OCI-LY7 (cell line): ENCODE measurements at regions of chr7 and their contacts with region 1.

Region 1: GRCh38 chr7:39971924-39972323 is 21.9 kb downstream of the CDK13 start:
- DNase-seq: peak; percentile 79
- H3K4me3 ChIP-seq: peak overlapping the region; percentile 42
- H3K27ac ChIP-seq: peak overlapping the region; percentile 81
- H3K4me1 ChIP-seq: peaks cover 96% of the 10 kb centered on the region
- CTCF ChIP-seq: no peak

Region 2: DNA sequence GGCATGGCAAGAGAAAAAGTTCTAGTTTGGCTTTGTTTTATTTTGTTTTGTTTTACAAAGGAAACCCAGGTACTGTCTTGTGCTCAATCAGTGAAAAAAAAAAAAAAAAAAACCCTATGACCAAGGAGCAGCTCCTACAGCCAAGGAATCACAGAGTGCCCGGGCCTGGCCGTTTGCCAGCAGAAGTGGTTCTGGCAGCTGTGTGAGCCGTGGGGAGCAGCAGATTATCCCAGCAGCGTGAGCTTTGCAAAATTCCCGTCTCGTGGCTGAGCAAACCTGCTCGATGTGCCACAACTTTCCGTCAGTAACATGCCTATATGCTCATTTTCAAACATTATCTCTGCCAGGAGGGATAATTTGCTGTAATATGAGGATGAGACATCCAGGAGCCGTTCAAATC is 700.5 kb before region 1 on chr7:
- CTCF ChIA-PET with region 1: no interaction called
- POLR2A ChIA-PET with region 1: no interaction called
- intact Hi-C with region 1: no loop called
- DNase-seq: no peak
- H3K4me3 ChIP-seq: no peak overlapping the region
- H3K27ac ChIP-seq: no peak overlapping the region
- H3K4me1 ChIP-seq: no peaks in the 10 kb centered on the region
- CTCF ChIP-seq: no peak

Region 3: DNA sequence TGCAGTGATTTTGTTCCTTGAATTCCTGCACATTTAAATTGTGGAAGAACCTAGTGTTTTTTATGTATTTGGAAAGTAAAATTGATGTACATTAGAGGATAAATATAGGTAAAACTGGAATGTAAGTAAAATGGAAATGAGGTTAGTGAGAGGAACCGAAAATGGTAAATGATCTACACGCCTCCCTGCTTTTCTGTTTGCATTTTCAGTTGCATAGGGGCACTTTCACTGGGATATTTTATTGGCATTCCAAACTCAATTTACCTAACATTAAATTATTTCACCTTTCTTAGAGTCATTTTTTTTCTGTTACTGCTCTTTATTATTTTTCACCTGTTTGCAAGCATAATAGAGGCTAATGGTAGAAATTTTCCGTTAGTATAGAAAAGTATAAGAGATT is 13.9 kb before region 1 on chr7:
- CTCF ChIA-PET with region 1: no interaction called
- POLR2A ChIA-PET with region 1: interaction called, 85 read pairs
- intact Hi-C with region 1: no loop called
- DNase-seq: peak; percentile 44
- H3K4me3 ChIP-seq: peak overlapping the region; percentile 63
- H3K27ac ChIP-seq: peak overlapping the region; percentile 49
- H3K4me1 ChIP-seq: peaks cover 64% of the 10 kb centered on the region
- CTCF ChIP-seq: no peak